ENCODE measurements at regions of chr9 and their contacts with region 1.

Region 1: DNA sequence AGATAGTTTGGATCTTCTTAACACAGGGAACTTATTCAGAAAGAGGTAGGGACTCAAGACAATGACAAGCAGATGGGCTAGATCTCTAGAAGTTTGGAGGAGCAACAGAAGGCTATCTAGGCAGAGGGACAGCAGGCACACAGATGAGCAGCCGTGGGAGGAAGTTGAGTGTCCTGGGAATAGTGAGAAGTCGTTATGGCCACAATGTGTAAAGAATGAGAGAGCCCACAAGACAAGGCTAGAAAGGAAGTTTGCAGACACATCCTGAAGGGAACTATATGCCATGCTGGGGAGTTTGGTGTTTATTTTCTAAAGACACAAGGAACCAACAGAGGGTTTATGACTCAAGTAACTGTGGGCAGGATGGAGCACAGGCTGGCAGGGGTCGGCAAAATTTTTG is 160.6 kb downstream of the PALM2AKAP2 start:
- H3K4me3 Mint-ChIP-seq: no peak overlapping the region
- H3K27ac Mint-ChIP-seq: no peak overlapping the region
- H3K4me1 Mint-ChIP-seq: peaks cover 6% of the 10 kb centered on the region
- H3K27me3 Mint-ChIP-seq: peaks cover 2% of the 10 kb centered on the region

Region 2: DNA sequence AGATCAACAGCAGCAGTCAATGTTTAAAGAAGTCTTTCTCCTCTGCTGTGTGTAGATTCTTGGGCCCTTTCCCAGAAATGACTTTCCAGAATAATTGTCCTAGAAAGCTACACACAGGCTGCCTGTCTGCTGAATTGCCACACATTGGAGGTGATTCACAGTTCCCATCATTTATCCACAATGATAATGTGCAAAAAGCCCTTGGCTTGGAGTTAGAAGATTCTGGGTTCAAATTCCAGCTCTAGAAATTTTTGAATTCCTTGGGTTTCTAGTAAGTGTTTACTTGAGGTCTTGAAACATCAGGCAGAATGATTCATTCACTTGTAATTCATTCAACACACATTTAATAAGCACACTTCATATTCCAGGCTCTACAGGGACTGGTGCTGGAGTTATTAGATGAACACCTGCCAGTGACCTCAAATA is 591.1 kb before region 1 on chr9:
- intact Hi-C with region 1: no loop called
- H3K4me3 Mint-ChIP-seq: no peak overlapping the region
- H3K27ac Mint-ChIP-seq: no peak overlapping the region
- H3K4me1 Mint-ChIP-seq: no peaks in the 10 kb centered on the region
- H3K27me3 Mint-ChIP-seq: peaks cover 8% of the 10 kb centered on the region

Region 3: DNA sequence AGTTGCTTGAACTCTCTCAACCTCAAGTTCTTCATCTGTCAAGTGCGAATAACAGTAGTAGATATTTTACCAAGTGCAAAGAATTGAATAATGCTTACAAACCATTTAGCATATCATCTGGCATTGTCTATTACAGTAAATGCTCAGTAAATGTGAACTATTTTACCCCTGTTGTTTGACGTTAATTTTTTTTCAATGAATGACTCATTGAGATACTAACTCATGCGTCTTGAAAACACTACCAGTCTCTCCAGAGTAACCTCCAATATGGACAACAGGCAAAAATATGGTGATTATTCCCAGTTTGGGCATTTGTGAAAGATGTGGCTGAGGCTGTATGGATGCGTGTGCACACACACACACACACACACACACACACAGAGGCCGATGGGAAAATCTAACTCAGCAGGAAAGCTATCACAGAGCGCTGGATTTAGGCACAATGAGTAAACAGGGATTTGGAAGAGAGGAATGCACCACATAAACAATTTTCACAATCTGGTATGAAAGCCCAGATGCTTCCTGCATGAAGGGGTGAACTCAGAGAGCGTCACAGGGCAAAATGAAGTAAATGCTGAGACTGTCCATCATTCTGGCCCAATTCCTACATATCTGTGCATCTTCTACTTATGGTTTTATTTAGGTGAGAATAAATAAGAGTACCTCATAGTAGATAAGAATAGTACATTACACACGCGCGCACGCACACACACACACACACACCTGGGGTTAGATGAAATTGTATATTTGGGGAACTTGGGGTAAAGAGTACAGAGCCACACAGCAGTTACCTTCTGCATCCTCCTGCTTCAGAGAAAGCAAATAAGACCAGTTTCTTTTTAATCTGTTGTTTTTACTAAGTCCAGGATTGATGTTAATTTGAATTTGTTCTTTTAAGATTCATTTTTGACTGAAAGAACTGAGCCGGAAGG is 31.8 kb before region 1 on chr9:
- intact Hi-C with region 1: loop called (anchors 2 kb)
- H3K4me3 Mint-ChIP-seq: no peak overlapping the region
- H3K27ac Mint-ChIP-seq: no peak overlapping the region
- H3K4me1 Mint-ChIP-seq: peaks cover 15% of the 10 kb centered on the region
- H3K27me3 Mint-ChIP-seq: peaks cover 3% of the 10 kb centered on the region

Measured in dendritic cell treated with granulocyte-macrophage colony-stimulating factor and Interleukin-4, amounts not matched to agents 40 ng/mL and 50 ng/mL, for 4 days (primary cell).